ENCODE measurements at regions of chr17 and their contacts with region 1.

Region 1: DNA sequence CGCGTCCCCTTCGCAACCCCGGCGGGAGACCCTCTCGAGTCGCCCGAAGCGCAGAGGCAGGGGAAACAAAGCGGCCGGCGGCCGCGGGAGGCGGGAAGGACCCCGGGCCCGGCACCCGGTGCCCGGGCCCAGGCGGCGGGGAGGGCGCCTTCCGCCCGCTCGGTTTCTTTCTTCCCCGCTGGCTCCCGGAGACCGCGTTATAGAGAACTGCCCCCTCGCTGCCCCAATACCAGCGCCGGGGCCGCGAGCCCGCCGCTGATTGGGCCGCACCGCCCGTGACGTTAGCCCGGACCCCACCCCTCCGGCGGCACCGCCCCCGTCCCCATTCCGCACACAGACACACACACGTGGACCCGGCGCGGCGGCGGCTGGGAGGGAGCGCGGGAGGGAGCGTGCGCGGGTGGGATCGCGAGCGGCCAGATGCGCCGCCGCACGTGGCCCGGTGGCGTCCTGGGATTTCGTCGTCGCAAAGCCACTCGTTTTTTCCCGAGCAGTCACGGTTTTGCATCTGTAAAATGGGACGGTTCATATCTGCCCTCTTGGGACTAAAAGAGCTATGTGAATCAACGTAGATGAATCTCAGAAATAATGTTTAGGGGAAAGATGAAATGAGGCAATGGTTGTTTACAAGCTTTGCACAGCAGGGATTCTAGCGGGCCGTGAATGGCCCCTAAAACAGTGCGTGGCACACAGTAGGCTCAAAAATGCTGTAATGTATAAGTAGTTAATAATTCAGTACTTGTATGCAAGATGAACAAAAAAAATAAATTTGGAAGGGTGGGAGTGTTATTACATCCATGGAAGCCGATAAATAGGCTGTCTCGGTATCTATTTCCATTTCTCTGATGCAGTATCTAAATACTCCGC is at the start of gene EPOP:
- DNase-seq: no peak
- ATAC-seq: peak; percentile 88
- H3K4me3 ChIP-seq: peak within 1 kb of the TSS; percentile 84
- H3K27ac ChIP-seq: no peak within 1 kb of the TSS
- H3K4me1 ChIP-seq: peaks cover 34% of the 10 kb centered on the region
- H3K27me3 ChIP-seq: peaks cover 8 to 12% of the 10 kb centered on the region in 2 experiments; a peak in 2 of 4 replicates
- CTCF ChIP-seq: no peak
- EP300 ChIP-seq: no peak
- POLR2A ChIP-seq: peak; percentile 62
- RAD21 ChIP-seq: no peak
- polyA plus RNA-seq, gene EPOP: 0.53 to 1.4 TPM

Region 2: DNA sequence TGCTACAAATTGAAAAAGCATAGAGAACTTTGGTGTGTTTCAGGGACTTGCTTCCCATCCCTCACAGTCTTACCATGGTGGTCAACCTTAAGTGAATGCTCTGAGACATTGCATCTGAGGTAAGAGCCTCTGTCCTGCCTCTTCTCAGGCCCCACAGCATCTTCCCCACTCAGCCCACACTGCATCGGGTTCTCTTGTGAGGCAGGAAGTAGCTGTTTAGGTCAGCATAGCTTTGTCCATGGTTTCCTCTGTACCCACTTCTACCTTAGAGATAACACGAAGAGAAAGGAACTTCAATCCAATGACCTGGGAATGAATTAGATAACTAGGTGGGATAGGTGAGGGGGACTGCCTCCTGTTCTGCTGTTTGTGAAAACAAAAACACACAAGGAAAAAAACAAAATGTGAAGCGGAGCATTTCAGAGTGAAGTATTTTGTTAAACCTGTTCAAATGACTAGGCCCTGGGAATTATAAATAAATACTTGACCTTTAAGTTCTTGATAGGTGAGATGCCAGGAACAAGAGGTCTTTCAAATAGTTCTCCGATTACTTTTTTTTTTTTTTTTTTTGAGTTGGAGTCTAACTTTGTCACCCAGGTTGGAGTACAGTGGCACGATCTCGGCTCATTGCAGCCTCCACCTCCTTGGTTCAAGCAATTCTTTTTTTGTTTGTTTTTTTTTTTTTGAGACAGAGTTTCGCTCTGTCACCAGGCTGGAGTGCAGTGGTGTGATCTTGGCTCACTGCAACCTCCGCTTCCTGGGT is 305.7 kb before region 1 on chr17:
- CTCF ChIA-PET with region 1: no interaction called
- POLR2A ChIA-PET with region 1: no interaction called
- RAD21 ChIA-PET with region 1: no interaction called
- SMC1A ChIA-PET with region 1: no interaction called
- in situ Hi-C with region 1: no loop called
- intact Hi-C with region 1: no loop called
- DNase-seq: no peak
- ATAC-seq: no peak
- H3K4me3 ChIP-seq: no peak overlapping the region
- H3K27ac ChIP-seq: no peak overlapping the region
- H3K4me1 ChIP-seq: no peaks in the 10 kb centered on the region
- H3K27me3 ChIP-seq: no peaks in the 10 kb centered on the region
- CTCF ChIP-seq: no peak
- EP300 ChIP-seq: no peak
- POLR2A ChIP-seq: no peak
- RAD21 ChIP-seq: no peak

Region 3: DNA sequence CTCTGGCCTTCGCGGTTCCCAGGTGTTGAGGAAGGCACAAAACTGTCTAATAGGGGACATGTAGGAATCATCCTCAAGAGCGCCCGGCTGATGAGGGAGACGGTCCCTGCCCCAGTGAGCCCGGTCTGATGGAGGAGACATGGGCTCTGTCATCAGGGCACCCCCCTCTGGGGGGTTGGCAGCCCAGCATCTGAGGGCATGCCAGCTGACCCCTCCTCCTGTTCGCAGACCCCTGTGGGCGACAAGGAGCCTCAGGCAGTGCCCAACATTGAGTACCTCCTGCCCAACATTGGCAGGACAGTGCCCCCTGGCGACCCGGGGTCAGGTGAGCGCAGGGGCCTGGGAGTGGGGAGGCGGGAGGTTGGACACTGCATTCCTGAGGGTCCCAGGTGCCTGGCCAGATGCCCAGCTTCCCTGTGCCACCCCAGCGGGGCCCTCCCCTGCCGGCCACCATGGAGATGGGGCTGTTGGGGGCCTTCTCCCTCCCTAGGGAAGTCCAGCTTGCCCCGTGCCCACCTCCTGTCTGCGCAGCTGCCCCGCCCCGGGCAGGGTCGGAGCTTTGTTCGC is 176.7 kb before region 1 on chr17:
- CTCF ChIA-PET with region 1: no interaction called
- POLR2A ChIA-PET with region 1: no interaction called
- RAD21 ChIA-PET with region 1: no interaction called
- SMC1A ChIA-PET with region 1: no interaction called
- in situ Hi-C with region 1: no loop called
- intact Hi-C with region 1: no loop called
- DNase-seq: no peak
- ATAC-seq: no peak
- H3K4me3 ChIP-seq: no peak overlapping the region
- H3K27ac ChIP-seq: no peak overlapping the region
- H3K4me1 ChIP-seq: no peaks in the 10 kb centered on the region
- H3K27me3 ChIP-seq: no peaks in the 10 kb centered on the region
- CTCF ChIP-seq: no peak
- EP300 ChIP-seq: no peak
- POLR2A ChIP-seq: no peak
- RAD21 ChIP-seq: no peak

Region 4: GRCh38 chr17:38656959-38657823 is 17.8 kb before region 1 on chr17:
- CTCF ChIA-PET with region 1: interaction called, 3 read pairs
- POLR2A ChIA-PET with region 1: no interaction called
- RAD21 ChIA-PET with region 1: interaction called, 5 read pairs
- SMC1A ChIA-PET with region 1: interaction called, 5 read pairs
- in situ Hi-C with region 1: no loop called
- intact Hi-C with region 1: loop called (anchors 2 kb)
- DNase-seq: no peak
- ATAC-seq: no peak
- H3K4me3 ChIP-seq: no peak overlapping the region
- H3K27ac ChIP-seq: no peak overlapping the region
- H3K4me1 ChIP-seq: peaks cover 55% of the 10 kb centered on the region
- H3K27me3 ChIP-seq: no peaks in the 10 kb centered on the region
- CTCF ChIP-seq: no peak
- EP300 ChIP-seq: no peak
- POLR2A ChIP-seq: peak; percentile 43; the same call in 1 of the 2 replicates
- RAD21 ChIP-seq: no peak

Region 5: GRCh38 chr17:38702166-38702899 is 27.4 kb after region 1 on chr17:
- CTCF ChIA-PET with region 1: interaction called, 16 read pairs
- POLR2A ChIA-PET with region 1: interaction called, 8 read pairs
- RAD21 ChIA-PET with region 1: interaction called, 24 read pairs
- SMC1A ChIA-PET with region 1: interaction called, 26 read pairs
- in situ Hi-C with region 1: no loop called
- intact Hi-C with region 1: loop called (anchors 1 kb)
- DNase-seq: no peak
- ATAC-seq: peak; percentile 38
- H3K4me3 ChIP-seq: peak overlapping the region; percentile 91
- H3K27ac ChIP-seq: peak overlapping the region; percentile 100
- H3K4me1 ChIP-seq: peaks cover 27% of the 10 kb centered on the region
- H3K27me3 ChIP-seq: no peaks in the 10 kb centered on the region
- CTCF ChIP-seq: no peak
- EP300 ChIP-seq: peak; percentile 8 to 56; a peak in 1 of 4 replicates
- POLR2A ChIP-seq: peak; percentile 90
- RAD21 ChIP-seq: no peak

Region 6: GRCh38 chr17:38735161-38735997 is 60.4 kb after region 1 on chr17:
- CTCF ChIA-PET with region 1: interaction called, 170 read pairs
- POLR2A ChIA-PET with region 1: interaction called, 19 read pairs
- RAD21 ChIA-PET with region 1: interaction called, 66 read pairs
- SMC1A ChIA-PET with region 1: interaction called, 50 read pairs
- in situ Hi-C with region 1: loop called (anchors 5 kb)
- intact Hi-C with region 1: loop called (anchors 1 kb)
- DNase-seq: no peak
- ATAC-seq: peak; percentile 57
- H3K4me3 ChIP-seq: no peak overlapping the region
- H3K27ac ChIP-seq: no peak overlapping the region
- H3K4me1 ChIP-seq: peaks cover 20% of the 10 kb centered on the region
- H3K27me3 ChIP-seq: no peaks in the 10 kb centered on the region
- CTCF ChIP-seq: peak; percentile 92 to 96 (median 95); a peak in 5 of 6 replicates
- EP300 ChIP-seq: no peak
- POLR2A ChIP-seq: no peak
- RAD21 ChIP-seq: peak; percentile 75

Region 7: DNA sequence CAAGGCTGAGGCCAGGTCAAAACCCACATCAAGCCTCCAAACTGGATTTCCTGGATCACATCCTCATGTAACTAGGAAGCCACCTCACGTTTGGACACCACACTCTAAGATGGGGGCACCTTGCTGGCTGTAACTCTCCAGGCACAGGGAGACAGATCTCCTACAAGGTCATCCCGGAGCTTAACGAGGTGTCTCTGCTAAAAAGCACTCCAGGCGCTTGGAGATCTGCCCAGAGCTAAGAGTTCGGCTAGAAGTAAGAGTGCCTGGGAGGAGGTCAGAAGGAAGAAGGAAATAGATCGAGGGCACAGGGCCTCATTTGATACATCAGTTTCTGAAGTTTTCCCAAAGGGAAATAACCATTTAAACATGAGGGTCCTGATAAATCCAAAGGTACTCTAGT is 93.4 kb after region 1 on chr17:
- CTCF ChIA-PET with region 1: no interaction called
- POLR2A ChIA-PET with region 1: no interaction called
- RAD21 ChIA-PET with region 1: no interaction called
- SMC1A ChIA-PET with region 1: no interaction called
- in situ Hi-C with region 1: no loop called
- intact Hi-C with region 1: no loop called
- DNase-seq: no peak
- ATAC-seq: no peak
- H3K4me3 ChIP-seq: no peak overlapping the region
- H3K27ac ChIP-seq: no peak overlapping the region
- H3K4me1 ChIP-seq: no peaks in the 10 kb centered on the region
- H3K27me3 ChIP-seq: no peaks in the 10 kb centered on the region
- CTCF ChIP-seq: no peak
- EP300 ChIP-seq: no peak
- POLR2A ChIP-seq: no peak
- RAD21 ChIP-seq: no peak

Region 8: DNA sequence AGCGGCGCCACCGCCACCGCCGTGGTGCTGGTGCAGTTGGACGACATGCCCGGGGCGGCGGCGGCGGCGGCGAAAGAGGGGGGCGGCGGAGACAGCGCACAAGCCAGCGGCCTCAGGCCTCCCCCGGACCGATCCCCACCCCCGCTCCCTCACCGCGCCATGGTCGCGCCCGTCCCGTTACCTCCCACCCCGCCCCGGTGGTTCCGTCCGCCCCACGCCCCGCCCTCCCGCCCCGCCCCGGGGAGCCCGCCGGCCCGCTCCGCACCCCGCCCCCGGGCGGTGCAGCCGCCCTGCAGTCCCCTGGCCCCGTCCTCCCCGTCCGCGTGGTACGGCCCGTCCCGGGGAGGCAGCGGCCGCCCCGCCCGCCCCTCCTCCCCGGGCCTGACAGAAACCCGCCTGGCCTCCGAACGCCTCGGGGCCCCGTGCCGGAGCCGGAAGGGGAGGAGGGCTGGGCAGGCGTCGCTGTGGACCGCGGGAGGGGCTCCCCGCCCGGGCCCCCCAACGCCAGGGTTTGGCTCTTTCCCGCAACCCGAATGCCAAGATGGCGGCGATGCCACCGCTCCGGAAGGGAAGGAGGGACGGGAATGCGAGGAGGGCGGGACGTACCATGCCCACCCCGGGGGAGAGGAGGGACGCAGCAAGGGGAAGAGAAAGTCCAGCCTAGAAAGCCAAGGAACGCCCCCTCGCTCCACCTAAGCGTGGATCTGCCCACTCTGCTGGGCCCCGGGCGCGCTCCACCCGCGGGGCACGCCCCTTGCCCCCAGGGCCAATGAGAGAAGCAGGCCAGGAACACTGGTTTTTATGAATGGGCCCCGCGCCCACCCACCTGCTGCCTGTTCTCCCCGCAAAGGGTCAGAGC is 124.6 kb after region 1 on chr17 and contains the start of gene PIP4K2B:
- CTCF ChIA-PET with region 1: no interaction called
- POLR2A ChIA-PET with region 1: no interaction called
- RAD21 ChIA-PET with region 1: interaction called, 3 read pairs
- SMC1A ChIA-PET with region 1: no interaction called
- in situ Hi-C with region 1: no loop called
- intact Hi-C with region 1: loop called (anchors 10 kb)
- DNase-seq: peak; percentile 91
- ATAC-seq: peak; percentile 92
- H3K4me3 ChIP-seq: peak within 1 kb of the TSS; percentile 85
- H3K27ac ChIP-seq: peak within 1 kb of the TSS; percentile 93
- H3K4me1 ChIP-seq: peaks cover 11% of the 10 kb centered on the region
- H3K27me3 ChIP-seq: no peaks in the 10 kb centered on the region
- CTCF ChIP-seq: no peak
- EP300 ChIP-seq: no peak
- POLR2A ChIP-seq: peak; percentile 88
- RAD21 ChIP-seq: no peak
- polyA plus RNA-seq, gene PIP4K2B: 3.8 to 4.0 TPM

Measured in GM12878 (cell line).